ENCODE measurements at regions of chr10 and their contacts with region 1.

Region 1: GRCh38 chr10:97072851-97073665 is 112.7 kb downstream of the SLIT1 start:
- DNase-seq: peak; percentile 73 to 88 (median 82)
- H3K4me3 ChIP-seq: no peak overlapping the region
- H3K27ac ChIP-seq: no peak overlapping the region
- H3K4me1 ChIP-seq: peaks cover 0 to 6% (median 1%) of the 10 kb centered on the region in 4 experiments
- H3K27me3 ChIP-seq: peaks cover 0 to 52% (median 14%) of the 10 kb centered on the region in 5 experiments

Region 2: GRCh38 chr10:97059006-97059871 is 13.8 kb before region 1 on chr10:
- CTCF ChIA-PET with region 1: interaction called, 40 read pairs
- POLR2A ChIA-PET with region 1: interaction called, 3 read pairs
- DNase-seq: no peak
- H3K4me3 ChIP-seq: no peak overlapping the region
- H3K27ac ChIP-seq: no peak overlapping the region
- H3K4me1 ChIP-seq: no peaks in the 10 kb centered on the region
- H3K27me3 ChIP-seq: peaks cover 0 to 2% (median 0%) of the 10 kb centered on the region in 5 experiments

Region 3: GRCh38 chr10:97196223-97197029 is 123.4 kb after region 1 on chr10:
- CTCF ChIA-PET with region 1: interaction called, 18 read pairs
- POLR2A ChIA-PET with region 1: no interaction called
- DNase-seq: peak; percentile 63 to 84 (median 83)
- H3K4me3 ChIP-seq: peak overlapping the region in 6 of 7 experiments; percentile 46 to 78 (median 58)
- H3K27ac ChIP-seq: no peak overlapping the region
- H3K4me1 ChIP-seq: peaks cover 0 to 24% (median 15%) of the 10 kb centered on the region in 4 experiments
- H3K27me3 ChIP-seq: peaks cover 0 to 69% (median 26%) of the 10 kb centered on the region in 5 experiments

Region 4: DNA sequence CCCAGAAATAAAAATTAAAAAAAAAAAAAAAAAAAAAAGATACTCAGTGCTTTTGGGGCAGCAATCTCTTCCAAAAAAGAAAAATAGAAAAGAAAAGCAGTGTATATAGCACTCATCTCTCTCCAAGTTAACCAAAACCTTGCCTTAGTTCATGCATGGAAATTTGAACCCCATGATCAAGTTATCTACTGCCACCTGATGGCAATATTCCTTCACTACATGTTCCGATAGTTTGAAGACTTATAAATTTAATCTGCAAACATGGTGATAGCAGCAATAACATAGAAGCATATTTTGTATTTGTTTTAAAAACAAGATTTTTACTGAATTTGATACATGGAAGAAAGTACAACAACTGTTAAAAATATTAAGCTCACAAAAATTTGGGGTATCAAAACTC is 161.3 kb after region 1 on chr10:
- CTCF ChIA-PET with region 1: interaction called, 111 read pairs
- POLR2A ChIA-PET with region 1: no interaction called
- DNase-seq: peak; percentile 51 to 73 (median 69)
- H3K4me3 ChIP-seq: no peak overlapping the region
- H3K27ac ChIP-seq: no peak overlapping the region
- H3K4me1 ChIP-seq: no peaks in the 10 kb centered on the region
- H3K27me3 ChIP-seq: no peaks in the 10 kb centered on the region

Region 5: DNA sequence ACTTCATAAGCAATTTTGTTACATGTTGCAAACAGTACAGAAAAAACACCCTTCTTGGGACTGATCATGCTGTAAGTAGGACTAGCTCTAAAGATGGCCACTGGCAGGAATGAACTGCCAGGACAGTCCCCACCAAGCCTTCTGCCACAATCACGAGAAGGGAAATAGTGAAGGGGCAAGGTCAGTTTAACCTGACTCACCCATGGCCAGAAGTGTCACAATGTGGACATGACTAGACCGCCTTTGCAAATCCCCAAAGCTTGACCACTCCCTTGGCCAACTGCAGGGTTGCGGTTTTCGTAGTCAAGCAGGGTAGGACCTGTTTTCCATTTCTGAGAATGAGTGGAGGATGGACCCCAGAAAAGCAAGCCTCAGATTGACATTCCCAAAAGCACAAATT is 280.9 kb after region 1 on chr10:
- CTCF ChIA-PET with region 1: no interaction called
- POLR2A ChIA-PET with region 1: no interaction called
- DNase-seq: no peak
- H3K4me3 ChIP-seq: no peak overlapping the region
- H3K27ac ChIP-seq: no peak overlapping the region
- H3K4me1 ChIP-seq: peaks cover 4 to 20% (median 18%) of the 10 kb centered on the region in 4 experiments
- H3K27me3 ChIP-seq: no peaks in the 10 kb centered on the region